GM10248 (cell line): ENCODE measurements at regions of chr7 and their contacts with region 1.

Region 1: DNA sequence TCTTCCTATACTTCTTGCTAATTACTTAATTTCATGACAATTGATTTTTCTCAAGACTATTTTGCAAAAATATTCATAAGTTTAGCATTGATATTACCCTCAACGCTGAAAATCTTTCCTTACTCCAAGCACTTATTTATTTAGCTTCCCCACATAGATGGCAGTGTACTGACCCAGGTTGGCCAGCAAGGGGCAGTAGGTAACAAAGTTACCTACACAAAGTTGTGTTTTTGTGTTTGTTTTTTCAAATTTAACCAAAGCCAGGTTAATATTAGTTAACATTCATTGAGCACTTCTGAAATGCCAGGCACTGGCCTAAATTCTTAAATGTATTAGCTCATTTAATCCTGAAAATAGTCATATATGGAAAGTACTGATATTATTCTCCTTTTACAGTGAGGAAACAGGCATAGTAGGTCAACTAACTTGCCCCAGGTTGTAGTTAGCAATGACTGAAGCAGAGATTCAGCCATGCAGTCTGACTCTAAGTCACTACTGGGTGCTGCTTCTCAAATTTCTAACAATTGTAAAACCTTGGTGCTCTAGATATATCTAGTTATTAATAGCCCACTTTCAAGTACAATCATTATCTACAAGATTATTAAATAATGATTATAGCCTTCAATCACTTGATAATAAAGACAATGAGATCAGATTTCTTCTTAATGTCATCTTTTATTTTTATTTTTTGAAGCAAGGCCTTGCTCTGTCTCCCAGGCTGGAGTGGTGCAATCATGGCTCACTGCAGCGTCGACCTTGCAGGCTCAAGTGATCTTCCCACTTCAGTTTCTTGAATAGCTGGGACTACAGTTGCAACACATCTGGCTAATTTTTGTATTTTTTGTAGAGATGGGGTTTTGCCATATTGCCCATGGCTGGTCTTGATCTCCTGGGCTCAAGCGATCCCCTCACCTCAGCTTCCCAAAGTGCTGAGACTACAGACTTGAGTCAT is 5.8 kb upstream of the GGCT start:
- DNase-seq: no peak
- CTCF ChIP-seq: peak; percentile 84

Region 2: DNA sequence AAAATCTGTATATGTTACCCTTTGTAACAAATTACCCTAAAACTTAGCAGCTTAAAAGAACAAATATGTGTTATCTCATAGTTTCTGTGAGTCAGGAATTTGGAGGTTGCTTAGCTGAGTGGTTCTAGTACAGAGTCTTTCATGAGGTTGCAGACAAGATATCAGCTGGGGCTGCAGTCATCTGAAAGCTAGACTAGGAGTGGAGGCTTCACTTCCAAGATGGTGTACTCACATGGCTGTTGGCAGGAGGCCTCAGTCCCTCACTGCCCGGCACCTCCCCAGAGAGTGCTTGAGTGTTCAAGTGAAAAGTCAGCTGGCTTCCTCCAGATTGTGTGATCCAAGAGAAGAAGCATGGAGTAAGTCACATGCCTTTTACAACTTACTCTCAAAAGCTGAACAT is 11.1 kb after region 1 on chr7:
- CTCF ChIA-PET with region 1: interaction called, 16 read pairs
- POLR2A ChIA-PET with region 1: no interaction called
- DNase-seq: no peak
- CTCF ChIP-seq: no peak

Region 3: DNA sequence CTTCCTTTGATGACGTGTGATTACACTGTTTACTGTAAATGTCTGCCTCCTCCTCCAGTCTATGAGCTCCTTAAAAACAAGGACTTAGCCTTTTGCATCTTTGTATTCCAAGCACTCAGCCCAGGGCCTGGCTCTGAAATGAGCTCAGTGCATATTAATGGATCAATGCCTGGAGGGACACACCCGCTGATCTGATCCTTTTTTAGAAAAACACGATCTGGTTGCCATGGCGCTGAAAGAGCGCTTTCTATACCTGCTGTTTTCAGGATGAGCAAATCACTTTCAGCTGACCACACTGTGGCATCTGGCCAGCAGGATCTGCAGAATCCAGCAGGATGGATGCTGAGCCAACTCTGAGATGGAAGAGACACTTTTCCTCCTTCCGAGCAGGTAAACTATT is 46.4 kb after region 1 on chr7:
- CTCF ChIA-PET with region 1: interaction called, 16 read pairs
- POLR2A ChIA-PET with region 1: no interaction called
- DNase-seq: no peak
- CTCF ChIP-seq: no peak